ENCODE measurements at regions of chr22 and their contacts with region 1.

Region 1: DNA sequence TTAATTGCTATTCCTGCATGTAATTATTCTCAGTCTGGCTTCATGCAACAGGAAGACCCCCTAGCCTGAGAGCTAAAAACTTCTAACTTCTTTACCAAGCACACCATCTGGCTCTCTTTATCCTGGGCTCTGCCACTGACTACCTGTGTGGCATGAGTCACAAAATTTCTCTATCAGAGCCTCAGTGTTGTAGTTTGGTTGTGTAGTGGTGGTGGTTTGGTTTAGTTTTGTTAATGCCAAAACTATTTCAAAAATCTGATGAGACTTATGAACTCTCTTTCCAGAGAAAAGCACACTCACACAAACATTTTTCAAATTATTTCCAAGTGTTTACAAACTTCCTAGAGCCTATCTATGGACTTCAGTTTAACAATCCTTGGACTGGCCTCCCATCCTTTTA is 7.5 kb upstream of the IL17RA start:
- DNase-seq: no peak
- H3K4me3 ChIP-seq: no peak overlapping the region
- CTCF ChIP-seq: no peak
- POLR2A ChIP-seq: no peak

Region 2: DNA sequence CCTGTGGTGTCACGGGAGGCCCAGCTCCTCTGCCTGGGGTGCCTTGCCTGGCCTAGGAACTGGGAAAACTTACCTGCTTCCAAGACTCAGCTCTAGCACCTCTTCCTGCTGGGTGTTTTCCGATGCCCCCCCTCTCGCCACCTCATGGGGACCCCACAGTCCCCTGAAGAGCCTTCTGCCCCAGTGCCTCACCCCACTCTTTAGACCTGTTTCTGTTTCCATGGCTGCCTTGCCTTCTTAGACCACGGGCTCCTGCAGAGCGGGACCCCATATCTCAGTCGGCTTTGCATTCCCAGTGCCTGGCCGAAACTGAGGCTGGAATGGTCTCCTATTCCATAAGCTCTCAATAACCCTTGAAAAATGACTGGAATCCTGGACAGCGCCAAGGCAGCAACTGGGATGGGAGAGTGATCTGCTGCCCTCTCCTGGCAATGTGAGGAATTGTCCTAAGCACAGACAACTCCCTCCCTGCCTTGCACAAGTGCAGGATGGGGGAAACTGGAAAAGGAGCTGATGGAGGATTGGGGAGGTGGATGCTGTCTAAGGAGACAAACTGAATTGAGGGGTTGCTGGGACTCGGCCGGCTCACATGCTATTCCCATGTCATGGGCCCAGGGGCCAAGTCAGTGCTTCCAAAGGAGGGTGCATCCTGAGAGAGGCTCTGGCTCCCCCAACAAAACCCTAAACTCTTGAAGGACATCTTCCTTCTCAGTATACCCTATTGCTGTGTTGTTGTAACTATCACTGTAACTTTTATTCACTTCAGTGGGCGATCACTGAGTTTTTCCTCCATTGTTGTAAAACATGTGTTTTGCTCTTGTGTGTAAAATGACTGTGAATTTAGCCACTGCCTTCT is 19.1 kb before region 1 on chr22:
- intact Hi-C with region 1: no loop called
- DNase-seq: peak; percentile 60 to 91
- H3K4me3 ChIP-seq: no peak overlapping the region
- CTCF ChIP-seq: peak in 1 of 3 donors; percentile 24
- POLR2A ChIP-seq: no peak

Region 3: DNA sequence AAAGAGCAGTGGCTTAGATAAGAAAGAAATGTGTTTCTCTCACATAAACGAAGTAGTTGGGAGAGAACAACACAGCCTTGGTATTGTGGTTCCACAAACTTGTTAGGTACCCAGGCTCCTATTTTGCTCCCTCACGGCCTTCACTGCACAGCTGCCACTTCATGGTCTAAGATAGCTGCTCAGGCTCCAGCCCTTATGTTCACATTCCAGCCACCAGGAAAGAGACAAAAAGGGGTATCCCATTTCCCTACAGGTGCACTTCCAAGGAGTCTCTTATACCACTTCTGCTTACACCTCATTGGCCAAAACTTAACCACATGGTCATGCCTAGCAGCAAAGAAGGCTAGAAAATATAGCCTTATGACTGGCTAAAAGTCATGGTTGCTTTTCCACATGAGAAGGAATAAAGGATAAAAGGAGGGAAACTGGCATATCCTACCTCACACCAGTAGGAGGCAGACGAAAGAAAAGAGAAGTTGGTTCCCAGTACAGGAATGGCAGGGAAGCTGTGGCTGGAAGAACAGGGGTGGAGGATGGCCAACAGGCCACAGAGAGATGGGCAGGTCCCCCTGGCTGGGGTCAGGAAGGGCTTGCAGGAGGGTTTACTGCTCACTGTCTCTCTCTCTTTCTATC is 87.3 kb after region 1 on chr22:
- intact Hi-C with region 1: loop called (anchors 10 kb)
- DNase-seq: no peak
- H3K4me3 ChIP-seq: no peak overlapping the region
- CTCF ChIP-seq: no peak
- POLR2A ChIP-seq: no peak